Gastrocnemius medialis (tissue), 4 donors: ENCODE measurements at regions of chr19 and their contacts with region 1.

Region 1: GRCh38 chr19:506404-507285 is 652 bp upstream of the TPGS1 start:
- DNase-seq: peak; percentile 99
- ATAC-seq: peak; percentile 94 to 96
- H3K4me3 ChIP-seq: peak overlapping the region; percentile 88 to 100 (median 96)
- H3K27ac ChIP-seq: peak overlapping the region; percentile 90 to 99 (median 91)
- H3K4me1 ChIP-seq: peaks cover 14 to 25% of the 10 kb centered on the region in 2 donors
- H3K27me3 ChIP-seq: no peaks in the 10 kb centered on the region
- CTCF ChIP-seq: peak; percentile 93 to 97 (median 96)
- POLR2A ChIP-seq: no peak

Region 2: DNA sequence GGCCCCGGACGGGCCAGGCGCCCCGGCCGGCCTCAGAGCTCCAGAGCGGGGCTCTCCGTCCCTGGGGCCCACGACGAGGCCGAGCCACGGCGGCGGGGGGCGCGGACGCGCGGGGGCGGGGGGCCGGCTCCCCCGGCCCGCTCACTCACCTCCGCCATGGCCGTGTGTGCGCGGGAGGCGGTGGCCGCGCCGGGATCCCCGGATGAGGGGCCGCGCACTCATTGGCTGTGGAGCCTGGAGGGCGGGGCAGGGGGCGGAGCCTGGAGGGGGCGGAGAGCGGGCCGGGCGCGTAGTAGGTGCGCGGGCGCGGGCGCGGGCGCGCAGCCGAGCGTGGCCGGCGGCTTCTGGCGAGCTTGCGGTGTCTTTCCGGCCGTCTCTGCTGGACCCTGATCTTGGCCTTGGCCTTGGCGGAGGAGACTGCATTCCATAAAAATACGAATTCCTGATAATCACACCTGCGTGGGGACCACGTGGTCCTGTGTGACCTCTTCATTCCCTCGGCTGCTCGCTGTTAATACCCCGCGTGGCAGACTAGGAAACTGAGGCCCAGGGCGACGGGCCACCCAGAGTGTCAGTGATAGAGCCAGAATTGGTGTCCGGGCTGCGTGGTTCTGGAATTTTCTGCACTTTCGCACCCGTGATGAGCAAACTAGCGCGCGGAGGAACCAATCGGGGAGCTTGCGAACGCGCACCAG is 161.9 kb before region 1 on chr19 and contains the start of gene MIER2:
- in situ Hi-C with region 1: no loop called
- intact Hi-C with region 1: loop called (anchors 1 kb)
- DNase-seq: peak; percentile 64 to 74
- ATAC-seq: peak; percentile 92 to 96
- H3K4me3 ChIP-seq: peak within 1 kb of the TSS; percentile 68 to 76 (median 71)
- H3K27ac ChIP-seq: peak within 1 kb of the TSS; percentile 60 to 80 (median 74)
- H3K4me1 ChIP-seq: peaks cover 29 to 33% of the 10 kb centered on the region in 2 donors
- H3K27me3 ChIP-seq: no peaks in the 10 kb centered on the region
- CTCF ChIP-seq: no peak
- POLR2A ChIP-seq: no peak
- total RNA-seq, gene MIER2: 10.6 to 21.0 (median 16.5) TPM

Region 3: GRCh38 chr19:459724-460511 is 46.7 kb before region 1 on chr19:
- in situ Hi-C with region 1: no loop called
- intact Hi-C with region 1: loop called (anchors 2 kb)
- DNase-seq: peak in 1 of 2 donors; percentile 25
- ATAC-seq: peak; percentile 60 to 68
- H3K4me3 ChIP-seq: peak overlapping the region; percentile 59 to 76 (median 62)
- H3K27ac ChIP-seq: peak overlapping the region; percentile 63 to 84 (median 74)
- H3K4me1 ChIP-seq: peaks cover 0 to 8% of the 10 kb centered on the region in 2 donors
- H3K27me3 ChIP-seq: peaks cover 12 to 20% (median 15%) of the 10 kb centered on the region in 3 donors
- CTCF ChIP-seq: no peak
- POLR2A ChIP-seq: peak; percentile 52 to 53

Region 4: GRCh38 chr19:531009-531752 is 24.5 kb after region 1 on chr19:
- in situ Hi-C with region 1: no loop called
- intact Hi-C with region 1: loop called (anchors 1 kb)
- DNase-seq: peak; percentile 47 to 76
- ATAC-seq: peak; percentile 75
- H3K4me3 ChIP-seq: peak overlapping the region; percentile 53 to 100 (median 91)
- H3K27ac ChIP-seq: peak overlapping the region; percentile 97 to 99 (median 98)
- H3K4me1 ChIP-seq: peaks cover 31 to 32% of the 10 kb centered on the region in 2 donors
- H3K27me3 ChIP-seq: peaks cover 7 to 11% (median 8%) of the 10 kb centered on the region in 3 donors
- CTCF ChIP-seq: peak in 2 of 5 experiments; percentile 3 to 31
- POLR2A ChIP-seq: no peak

Region 5: GRCh38 chr19:680287-681028 is 173.8 kb after region 1 on chr19:
- in situ Hi-C with region 1: no loop called
- intact Hi-C with region 1: loop called (anchors 1 kb)
- DNase-seq: peak; percentile 99 to 100
- ATAC-seq: peak; percentile 84 to 87
- H3K4me3 ChIP-seq: peak overlapping the region; percentile 56 to 89 (median 66)
- H3K27ac ChIP-seq: peak overlapping the region; percentile 77 to 89 (median 86)
- H3K4me1 ChIP-seq: peaks cover 0 to 28% of the 10 kb centered on the region in 2 donors
- H3K27me3 ChIP-seq: peaks cover 7 to 12% (median 9%) of the 10 kb centered on the region in 3 donors
- CTCF ChIP-seq: peak in 3 of 5 experiments; percentile 61 to 66 (median 65)
- POLR2A ChIP-seq: peak; percentile 55 to 78